ENCODE measurements at regions of chr19 and their contacts with region 1.

Region 1: GRCh38 chr19:19865739-19866481 is at the start of gene ZNF253:
- DNase-seq: peak; percentile 84 to 97 (median 93)
- ATAC-seq: peak; percentile 89 to 91
- H3K4me3 Mint-ChIP-seq: peak within 1 kb of the TSS; percentile 99 to 100 (median 100)
- H3K27ac Mint-ChIP-seq: peak within 1 kb of the TSS; percentile 96 to 99 (median 99)
- H3K4me1 Mint-ChIP-seq: peaks cover 8 to 42% (median 31%) of the 10 kb centered on the region in 4 donors
- H3K27me3 Mint-ChIP-seq: no peaks in the 10 kb centered on the region
- polyA plus RNA-seq, gene ZNF253: 7.1 to 9.4 (median 8.9) TPM

Region 2: GRCh38 chr19:19732579-19733501 is 133.1 kb before region 1 on chr19 and contains the start of gene ZNF14:
- POLR2A ChIA-PET with region 1: interaction called, 37 read pairs
- DNase-seq: peak; percentile 79 to 96 (median 89)
- ATAC-seq: peak; percentile 96 to 99
- H3K4me3 Mint-ChIP-seq: peak within 1 kb of the TSS; percentile 94 to 100 (median 98)
- H3K27ac Mint-ChIP-seq: peak within 1 kb of the TSS; percentile 89 to 99 (median 98)
- H3K4me1 Mint-ChIP-seq: peaks cover 7 to 38% (median 27%) of the 10 kb centered on the region in 4 donors
- H3K27me3 Mint-ChIP-seq: no peaks in the 10 kb centered on the region
- polyA plus RNA-seq, gene ZNF14: 8.2 to 16.3 (median 11.4) TPM

Region 3: DNA sequence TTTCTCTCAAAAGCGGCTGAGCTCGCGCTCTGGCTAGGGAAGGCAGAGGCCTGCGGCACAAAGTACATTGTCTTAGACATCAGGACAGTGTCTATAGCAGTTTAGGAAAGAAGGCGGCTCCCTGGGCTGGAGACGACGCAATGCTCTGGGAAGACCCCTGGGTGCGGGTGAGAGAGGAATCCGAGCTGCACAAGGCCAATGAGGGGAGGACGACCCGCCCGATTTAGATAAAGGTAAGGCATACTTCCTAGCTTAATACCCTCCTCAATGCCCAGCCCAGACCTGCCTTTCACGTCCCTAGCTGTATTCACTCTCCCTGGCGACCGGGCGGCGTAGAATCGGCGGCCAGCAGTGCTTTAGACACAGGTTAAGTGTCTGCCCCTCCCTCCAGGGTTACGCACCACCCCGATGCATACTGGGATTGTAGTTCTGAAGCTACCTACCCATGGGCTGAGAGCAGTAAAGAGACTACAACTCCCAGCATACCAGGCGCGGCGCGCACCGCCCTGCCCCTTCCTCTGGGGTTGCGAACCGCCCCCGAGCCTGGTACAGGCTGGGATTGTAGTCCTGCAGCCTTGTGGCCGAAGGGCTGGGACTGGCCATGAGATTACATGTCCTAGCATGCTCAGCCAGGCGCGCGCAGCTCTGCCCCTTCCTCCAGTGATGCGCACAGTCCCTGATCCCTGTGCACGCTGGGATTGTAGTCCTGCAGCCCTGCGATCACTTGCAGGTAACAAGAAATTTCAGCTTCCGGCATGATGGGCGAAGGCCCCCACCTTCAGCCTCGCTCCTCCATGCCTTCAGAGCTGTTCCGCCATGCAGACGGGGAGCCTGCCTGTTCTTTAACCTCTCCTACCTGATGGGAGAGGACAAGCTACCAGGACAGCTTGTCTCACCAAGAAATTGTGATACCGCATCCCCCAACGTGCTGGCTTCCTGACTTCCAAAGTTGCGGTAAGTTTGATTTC is 89.6 kb before region 1 on chr19:
- POLR2A ChIA-PET with region 1: interaction called, 28 read pairs
- DNase-seq: peak; percentile 80 to 94 (median 91)
- ATAC-seq: peak; percentile 97 to 98
- H3K4me3 Mint-ChIP-seq: peak overlapping the region; percentile 94 to 100 (median 99)
- H3K27ac Mint-ChIP-seq: peak overlapping the region; percentile 95 to 99 (median 96)
- H3K4me1 Mint-ChIP-seq: peaks cover 21 to 65% (median 58%) of the 10 kb centered on the region in 4 donors
- H3K27me3 Mint-ChIP-seq: no peaks in the 10 kb centered on the region

Region 4: GRCh38 chr19:19884583-19884982 is 18.7 kb after region 1 on chr19:
- POLR2A ChIA-PET with region 1: interaction called, 11 read pairs
- DNase-seq: no peak
- ATAC-seq: no peak
- H3K4me3 Mint-ChIP-seq: no peak overlapping the region
- H3K27ac Mint-ChIP-seq: no peak overlapping the region
- H3K4me1 Mint-ChIP-seq: no peaks in the 10 kb centered on the region
- H3K27me3 Mint-ChIP-seq: no peaks in the 10 kb centered on the region

Region 5: GRCh38 chr19:19900729-19901444 is 35.0 kb after region 1 on chr19 and contains the start of gene ZNF93:
- POLR2A ChIA-PET with region 1: interaction called, 39 read pairs
- DNase-seq: peak; percentile 68 to 96 (median 91)
- ATAC-seq: peak; percentile 95 to 97
- H3K4me3 Mint-ChIP-seq: peak within 1 kb of the TSS; percentile 92 to 100 (median 96)
- H3K27ac Mint-ChIP-seq: peak within 1 kb of the TSS; percentile 80 to 98 (median 95)
- H3K4me1 Mint-ChIP-seq: peaks cover 20 to 39% (median 34%) of the 10 kb centered on the region in 4 donors
- H3K27me3 Mint-ChIP-seq: no peaks in the 10 kb centered on the region
- polyA plus RNA-seq, gene ZNF93: 7.7 to 11.5 (median 11.2) TPM

Measured in naive thymus-derived CD8-positive, alpha-beta T cell (primary cell).